ENCODE measurements at regions of chr10 and their contacts with region 1.

Region 1: DNA sequence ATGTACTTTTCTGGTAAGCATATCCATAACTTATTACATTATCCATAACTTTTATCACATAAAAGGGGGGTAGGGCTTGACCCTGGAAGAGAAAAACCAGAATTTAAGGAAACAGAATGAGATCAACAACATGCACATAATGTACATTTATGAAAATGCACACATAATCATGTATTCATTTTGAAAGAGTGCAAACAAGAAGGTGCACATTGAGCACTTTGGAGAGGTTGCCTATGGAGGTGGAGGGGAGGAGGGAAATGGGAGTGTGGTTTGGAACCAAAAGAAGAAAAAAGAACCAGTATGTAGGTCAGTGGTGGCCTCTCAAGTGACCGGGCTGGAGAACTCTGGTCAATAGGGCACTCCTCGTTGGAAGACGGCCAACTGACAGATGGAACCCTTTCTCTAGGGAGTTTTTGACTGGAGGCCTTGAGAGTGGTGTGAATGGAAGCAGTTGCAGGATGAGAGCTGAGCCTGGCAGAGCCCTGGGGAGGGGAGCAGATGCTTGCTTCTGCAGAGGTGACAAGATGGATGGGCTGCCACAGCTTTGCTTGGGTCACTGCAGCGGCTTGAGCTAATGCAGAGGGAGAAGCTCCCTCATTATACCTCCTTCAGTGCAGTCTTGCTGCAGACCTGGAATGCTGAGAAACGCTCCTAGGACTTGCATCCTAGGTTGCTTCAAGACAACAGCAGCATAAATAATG is 192.7 kb downstream of the SEC23IP start:
- DNase-seq: no peak
- H3K4me3 Mint-ChIP-seq: no peak overlapping the region
- H3K27ac Mint-ChIP-seq: no peak overlapping the region
- H3K4me1 Mint-ChIP-seq: no peaks in the 10 kb centered on the region
- H3K27me3 Mint-ChIP-seq: no peaks in the 10 kb centered on the region
- CTCF ChIP-seq: no peak

Region 2: DNA sequence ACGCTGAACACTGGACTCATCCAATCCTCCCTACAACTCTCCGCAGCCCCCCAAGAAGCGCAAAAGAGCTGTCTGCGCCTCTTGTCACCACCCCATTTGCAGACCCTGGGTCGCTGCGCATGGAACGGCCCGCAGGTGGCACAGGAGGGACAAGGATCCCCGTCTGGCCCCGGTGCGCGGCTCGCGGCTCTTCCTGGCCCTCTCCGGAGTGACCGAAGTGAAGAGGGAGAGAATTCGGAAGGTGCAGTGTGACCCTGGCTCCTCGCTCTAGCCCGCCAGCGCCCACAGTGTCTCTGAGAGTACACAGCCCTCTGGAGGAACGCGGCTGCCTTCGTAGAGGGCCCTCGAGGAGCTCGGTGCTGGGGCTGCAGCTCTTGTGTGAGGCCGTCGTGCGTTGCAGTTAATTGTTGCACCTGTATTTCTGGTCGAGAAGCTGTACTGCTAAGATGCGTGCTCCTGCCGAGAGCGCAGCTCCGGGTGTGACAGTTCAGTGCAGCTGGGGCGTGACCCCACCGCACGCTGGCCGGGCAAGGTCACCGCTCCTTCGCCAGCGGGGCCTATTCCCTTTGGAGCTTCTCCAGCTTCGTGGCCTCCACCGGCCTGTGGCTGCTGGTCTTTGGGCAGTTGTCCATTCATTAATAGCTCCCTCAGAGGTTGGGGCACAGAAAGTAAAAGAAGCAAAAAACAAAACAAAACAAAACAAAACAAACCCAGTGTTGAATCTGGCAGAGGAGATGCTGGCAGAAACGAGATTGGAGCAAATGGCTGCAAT is 73.7 kb before region 1 on chr10:
- CTCF ChIA-PET with region 1: no interaction called
- intact Hi-C with region 1: loop called (anchors 2 kb)
- DNase-seq: no peak
- H3K4me3 Mint-ChIP-seq: no peak overlapping the region
- H3K27ac Mint-ChIP-seq: no peak overlapping the region
- H3K4me1 Mint-ChIP-seq: no peaks in the 10 kb centered on the region
- H3K27me3 Mint-ChIP-seq: peaks cover 10% of the 10 kb centered on the region
- CTCF ChIP-seq: no peak

Measured in Calu3 (cell line).